ENCODE measurements at regions of chr6 and their contacts with region 1.

Region 1: GRCh38 chr6:44074439-44075136 is 52.7 kb downstream of the MRPL14 start:
- H3K4me3 ChIP-seq: no peak overlapping the region
- H3K27ac ChIP-seq: peak overlapping the region; percentile 19; the same call in 1 of the 2 replicates
- H3K4me1 ChIP-seq: 0 out of 2 replicates have a peak, but pooled peaks cover 3% of the 10 kb centered on the region
- CTCF ChIP-seq: peak; percentile 94

Region 2: DNA sequence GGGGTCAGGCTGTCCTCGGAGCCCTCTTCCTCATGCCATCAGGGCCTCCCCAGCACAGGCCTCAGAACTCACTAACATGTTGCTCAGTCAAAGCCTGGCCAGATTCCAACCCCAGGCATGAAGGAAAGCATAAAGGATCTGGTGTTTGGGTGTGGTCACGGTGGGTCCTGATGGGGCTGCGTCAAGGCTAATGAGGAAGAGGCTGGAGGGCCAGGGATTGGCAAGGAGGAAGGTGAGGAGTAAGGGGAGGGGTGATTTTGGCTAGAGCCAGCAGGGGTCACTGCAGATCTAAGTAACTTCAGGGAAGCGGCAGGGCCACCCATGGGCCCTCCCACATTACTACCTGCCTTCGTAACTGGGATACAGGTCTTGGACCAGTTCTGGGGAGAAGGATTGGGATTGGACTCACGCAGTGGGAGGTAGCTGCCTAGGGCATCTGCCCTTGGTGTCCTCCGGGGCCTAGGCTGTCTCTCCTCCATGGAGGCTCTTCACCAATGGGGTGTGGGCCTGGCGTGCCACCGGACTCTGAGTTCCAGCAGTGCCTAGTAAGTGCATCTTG is 350.8 kb before region 1 on chr6:
- CTCF ChIA-PET with region 1: interaction called, 67 read pairs
- POLR2A ChIA-PET with region 1: interaction called, 4 read pairs
- H3K4me3 ChIP-seq: no peak overlapping the region
- H3K27ac ChIP-seq: no peak overlapping the region
- H3K4me1 ChIP-seq: peaks cover 10% of the 10 kb centered on the region
- CTCF ChIP-seq: peak; percentile 89

Region 3: GRCh38 chr6:43764721-43765120 is 309.9 kb before region 1 on chr6:
- CTCF ChIA-PET with region 1: interaction called, 189 read pairs
- POLR2A ChIA-PET with region 1: interaction called, 36 read pairs
- H3K4me3 ChIP-seq: no peak overlapping the region
- H3K27ac ChIP-seq: no peak overlapping the region
- H3K4me1 ChIP-seq: no peaks in the 10 kb centered on the region; the same call in 1 of the 2 replicates
- CTCF ChIP-seq: no peak

Region 4: DNA sequence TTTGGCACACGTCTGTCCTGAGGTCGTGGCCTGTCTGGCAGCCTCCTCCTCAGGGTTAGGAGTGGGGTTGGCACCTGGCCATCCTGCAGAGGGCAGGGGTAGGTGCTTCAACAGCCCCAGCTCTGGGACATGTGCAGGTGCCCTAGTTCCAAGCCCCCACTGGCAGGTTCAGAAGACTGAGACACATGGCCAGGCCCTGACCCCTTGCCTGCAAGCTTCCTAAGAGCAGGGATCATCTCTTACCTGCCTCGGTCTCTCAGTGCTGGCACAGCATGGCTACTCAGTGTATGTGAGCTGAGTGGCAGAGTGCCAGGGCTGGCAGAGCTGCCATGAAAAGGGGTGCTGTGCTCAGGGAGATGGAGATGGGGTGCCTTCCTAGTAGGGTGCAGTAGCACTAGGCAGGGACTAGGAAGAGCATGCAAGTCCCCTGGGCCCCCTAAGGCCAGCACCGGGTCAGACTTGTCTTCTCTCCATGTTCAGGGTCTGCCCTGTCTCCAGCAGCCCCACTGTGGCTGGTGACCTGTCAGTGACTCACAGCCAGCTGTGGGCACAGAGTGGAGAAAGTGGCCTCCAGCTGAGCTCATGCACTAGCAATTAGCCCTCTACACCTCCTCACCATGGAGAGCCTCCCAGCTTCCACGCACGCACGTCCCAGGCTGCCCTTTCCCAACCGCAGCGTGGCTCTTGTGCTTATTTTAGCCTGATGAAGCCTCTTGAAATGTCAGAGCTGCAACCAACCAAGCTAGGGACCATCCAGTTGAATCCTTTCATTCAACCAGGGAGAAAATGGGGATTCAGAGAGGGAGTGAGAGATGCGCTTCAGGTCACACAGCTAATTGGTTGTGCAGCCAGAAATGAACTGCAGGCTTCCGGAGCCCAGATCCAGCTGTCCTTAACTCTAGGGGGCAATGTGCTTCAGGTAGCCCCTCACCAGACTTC is 63.9 kb before region 1 on chr6:
- CTCF ChIA-PET with region 1: interaction called, 20 read pairs
- POLR2A ChIA-PET with region 1: interaction called, 4 read pairs
- H3K4me3 ChIP-seq: no peak overlapping the region
- H3K27ac ChIP-seq: no peak overlapping the region
- H3K4me1 ChIP-seq: no peaks in the 10 kb centered on the region
- CTCF ChIP-seq: no peak

Region 5: GRCh38 chr6:44064089-44064947 is 10.3 kb before region 1 on chr6:
- CTCF ChIA-PET with region 1: interaction called, 35 read pairs
- POLR2A ChIA-PET with region 1: interaction called, 3 read pairs
- H3K4me3 ChIP-seq: no peak overlapping the region
- H3K27ac ChIP-seq: no peak overlapping the region
- H3K4me1 ChIP-seq: no peaks in the 10 kb centered on the region
- CTCF ChIP-seq: no peak